ENCODE measurements at regions of chr3 and their contacts with region 1.

Region 1: DNA sequence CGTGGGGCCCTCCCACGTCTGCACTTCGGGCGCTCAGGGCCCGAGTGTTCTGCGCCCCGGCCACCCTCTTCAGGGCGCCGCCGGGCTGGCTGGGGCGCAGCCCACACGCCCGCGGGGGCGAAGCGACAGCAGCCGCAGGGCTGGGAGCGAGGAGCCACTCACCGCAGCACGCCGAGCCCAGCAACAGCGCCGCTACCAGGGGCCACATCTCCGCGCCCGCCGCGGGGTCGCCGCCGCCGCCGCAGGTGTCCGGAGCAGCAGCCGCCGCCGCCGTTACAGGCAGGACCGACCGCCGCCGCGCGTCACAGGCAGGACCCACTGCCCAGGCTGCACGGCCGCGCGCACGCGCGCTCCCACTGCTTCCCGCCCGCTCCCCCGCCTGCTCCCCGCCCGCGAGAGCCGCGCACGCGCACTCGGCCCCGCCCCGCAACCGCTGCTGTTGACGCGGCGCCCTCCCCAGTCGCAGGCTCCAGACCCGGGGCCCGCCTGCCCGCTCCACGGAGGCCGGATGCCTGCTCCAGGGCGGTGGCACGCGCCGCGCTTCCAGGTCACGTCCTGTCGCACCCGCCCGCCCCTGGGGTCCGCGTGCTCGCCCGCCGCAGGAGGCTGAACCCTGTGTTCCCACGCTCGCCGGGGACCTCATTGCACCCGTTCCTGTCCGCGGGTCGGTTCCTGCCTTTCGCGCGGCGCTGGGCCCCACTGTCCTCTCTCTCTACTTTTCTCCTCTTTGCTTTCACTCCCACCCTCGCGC is at the start of gene CD47:
- DNase-seq: peak; percentile 96 to 98 (median 98)
- H3K4me3 ChIP-seq: peak within 1 kb of the TSS; percentile 71 to 82
- H3K4me3 Mint-ChIP-seq: peak within 1 kb of the TSS; percentile 94 to 100 (median 98)
- H3K27ac ChIP-seq: peak within 1 kb of the TSS; percentile 96
- H3K27ac Mint-ChIP-seq: peak within 1 kb of the TSS; percentile 98 to 100 (median 99)
- H3K4me1 ChIP-seq: peaks cover 52% of the 10 kb centered on the region
- H3K4me1 Mint-ChIP-seq: peaks cover 33 to 51% (median 38%) of the 10 kb centered on the region in 4 donors
- H3K27me3 ChIP-seq: no peaks in the 10 kb centered on the region
- H3K27me3 Mint-ChIP-seq: peaks cover 0 to 1% of the 10 kb centered on the region in 2 donors
- total RNA-seq, gene CD47: 224 to 226 TPM

Region 2: DNA sequence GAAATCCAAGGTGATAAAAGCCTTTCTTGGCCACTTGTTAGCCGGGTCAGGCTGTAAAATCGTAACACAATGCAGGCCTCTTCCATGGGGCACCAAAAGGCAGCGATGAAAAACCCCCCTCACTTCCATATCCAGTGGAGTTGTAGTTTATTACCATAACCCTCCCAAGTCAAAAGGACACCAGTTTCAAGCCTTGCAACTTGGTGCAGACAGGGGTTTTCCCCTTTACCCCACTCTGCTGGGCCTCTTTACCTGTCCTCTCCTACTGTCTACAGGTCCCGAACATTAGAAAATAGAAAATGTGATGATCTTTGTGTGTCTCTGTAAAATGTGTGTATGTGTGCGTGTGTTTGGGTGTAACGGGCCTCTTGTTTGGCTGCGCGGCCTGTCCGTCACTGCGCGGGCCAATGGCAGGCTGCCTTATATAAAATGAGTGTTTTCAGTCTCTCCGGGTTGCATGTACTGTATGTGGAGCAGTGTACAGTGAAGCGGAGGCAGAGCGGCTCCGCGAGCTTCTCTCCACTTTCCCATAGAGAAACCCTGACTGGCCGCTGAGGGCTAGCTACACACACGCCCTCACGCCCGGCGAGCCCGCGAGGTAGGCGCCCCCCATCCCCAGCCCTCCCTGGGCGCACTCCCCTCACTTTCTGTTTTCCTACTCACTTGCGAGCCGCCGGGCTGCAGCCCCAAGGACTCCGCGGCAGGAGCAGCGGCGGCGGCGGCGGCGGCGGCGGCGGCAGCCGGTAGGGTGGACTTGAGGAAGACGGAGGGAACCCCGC is 568.2 kb before region 1 on chr3 and contains the start of gene BBX:
- CTCF ChIA-PET with region 1: no interaction called
- POLR2A ChIA-PET with region 1: interaction called, 4 read pairs
- intact Hi-C with region 1: loop called (anchors 10 kb)
- DNase-seq: peak; percentile 92 to 98 (median 96)
- H3K4me3 ChIP-seq: peak within 1 kb of the TSS; percentile 70 to 88
- H3K4me3 Mint-ChIP-seq: peak within 1 kb of the TSS; percentile 97 to 99 (median 98)
- H3K27ac ChIP-seq: peak within 1 kb of the TSS; percentile 87
- H3K27ac Mint-ChIP-seq: peak within 1 kb of the TSS; percentile 88 to 98 (median 97)
- H3K4me1 ChIP-seq: peaks cover 29% of the 10 kb centered on the region
- H3K4me1 Mint-ChIP-seq: peaks cover 21 to 29% (median 25%) of the 10 kb centered on the region in 4 donors
- H3K27me3 ChIP-seq: no peaks in the 10 kb centered on the region
- H3K27me3 Mint-ChIP-seq: no peaks in the 10 kb centered on the region
- total RNA-seq, gene BBX: 93.9 to 99.1 TPM

Region 3: GRCh38 chr3:108073764-108074431 is 17.0 kb before region 1 on chr3:
- CTCF ChIA-PET with region 1: interaction called, 7 read pairs
- POLR2A ChIA-PET with region 1: interaction called, 20 read pairs
- intact Hi-C with region 1: no loop called
- DNase-seq: no peak
- H3K4me3 ChIP-seq: no peak overlapping the region
- H3K4me3 Mint-ChIP-seq: peak overlapping the region in 5 of 8 donors; percentile 19 to 60 (median 29)
- H3K27ac ChIP-seq: no peak overlapping the region
- H3K27ac Mint-ChIP-seq: peak overlapping the region; percentile 28 to 83 (median 67)
- H3K4me1 ChIP-seq: peaks cover 91% of the 10 kb centered on the region
- H3K4me1 Mint-ChIP-seq: peaks cover 64 to 93% (median 69%) of the 10 kb centered on the region in 4 donors
- H3K27me3 ChIP-seq: no peaks in the 10 kb centered on the region
- H3K27me3 Mint-ChIP-seq: no peaks in the 10 kb centered on the region

Region 4: DNA sequence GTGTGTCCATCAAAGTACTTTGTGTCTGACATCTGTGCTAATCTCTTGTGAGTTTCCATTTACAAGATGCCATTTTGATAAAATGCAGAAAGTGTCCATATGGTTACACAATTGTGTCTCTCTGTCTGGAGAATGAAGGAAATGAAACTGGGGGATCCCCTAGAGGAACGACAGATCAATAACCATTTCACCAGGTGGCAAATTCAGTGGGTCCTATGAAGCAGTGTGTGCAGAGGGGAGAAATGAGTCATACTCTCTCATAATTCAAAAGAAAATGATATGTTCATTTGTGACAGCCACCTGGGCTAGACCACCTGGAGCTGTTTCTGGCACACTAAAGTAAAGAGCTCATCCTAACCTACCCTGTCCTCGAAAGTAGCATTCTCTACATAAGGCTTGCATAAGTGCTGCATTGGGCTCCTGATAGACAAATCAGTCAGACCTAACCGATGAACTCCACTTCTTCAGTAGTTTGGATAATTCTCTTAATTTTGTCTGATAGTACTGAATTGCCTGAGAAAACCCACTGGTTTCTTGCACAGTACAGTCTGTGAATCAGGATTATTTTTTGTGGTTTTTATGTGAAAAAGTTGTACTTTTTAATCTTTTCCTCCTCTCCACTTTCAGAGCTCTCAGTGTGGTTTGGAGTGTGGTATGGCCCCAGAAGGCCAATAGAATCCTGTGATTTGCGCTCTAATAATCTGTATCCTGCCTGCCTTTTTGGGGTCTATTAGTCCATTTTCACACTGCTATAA is 10.2 kb after region 1 on chr3:
- CTCF ChIA-PET with region 1: interaction called, 11 read pairs
- POLR2A ChIA-PET with region 1: interaction called, 50 read pairs
- intact Hi-C with region 1: loop called (anchors 1 kb)
- DNase-seq: peak in 2 of 5 donors; percentile 28 to 74
- H3K4me3 ChIP-seq: no peak overlapping the region
- H3K4me3 Mint-ChIP-seq: peak overlapping the region in 5 of 8 donors; percentile 1 to 59 (median 42)
- H3K27ac ChIP-seq: no peak overlapping the region
- H3K27ac Mint-ChIP-seq: peak overlapping the region; percentile 55 to 87 (median 81)
- H3K4me1 ChIP-seq: peaks cover 29% of the 10 kb centered on the region
- H3K4me1 Mint-ChIP-seq: peaks cover 29 to 38% (median 35%) of the 10 kb centered on the region in 4 donors
- H3K27me3 ChIP-seq: no peaks in the 10 kb centered on the region
- H3K27me3 Mint-ChIP-seq: no peaks in the 10 kb centered on the region

Region 5: DNA sequence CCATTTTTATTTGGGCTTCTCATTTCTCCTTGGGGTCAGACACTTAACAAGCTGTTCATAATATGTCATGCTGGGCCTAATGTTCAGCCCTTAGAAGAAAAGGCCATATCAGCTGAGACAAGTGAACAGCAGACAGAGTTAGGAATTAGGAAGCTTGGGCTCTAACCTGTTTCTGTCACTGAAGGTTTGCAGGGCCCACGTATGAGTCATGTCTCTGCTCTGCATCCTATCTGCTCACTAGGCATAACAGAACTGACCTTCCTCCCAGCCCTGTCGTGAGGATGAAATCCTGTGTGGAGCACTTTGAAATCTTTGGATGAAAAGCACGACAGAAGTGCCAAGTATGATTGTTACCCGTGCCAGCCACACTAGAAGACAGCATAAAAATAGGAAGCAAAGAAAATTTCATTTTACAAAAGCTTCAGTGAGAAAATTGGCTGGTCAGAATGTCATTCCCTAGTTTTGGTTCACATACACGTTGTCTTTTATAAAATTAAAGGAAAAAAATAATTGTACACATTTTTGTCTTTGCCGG is 26.4 kb after region 1 on chr3:
- CTCF ChIA-PET with region 1: interaction called, 8 read pairs
- POLR2A ChIA-PET with region 1: interaction called, 531 read pairs
- intact Hi-C with region 1: no loop called
- DNase-seq: no peak
- H3K4me3 ChIP-seq: no peak overlapping the region
- H3K4me3 Mint-ChIP-seq: no peak overlapping the region
- H3K27ac ChIP-seq: no peak overlapping the region
- H3K27ac Mint-ChIP-seq: peak overlapping the region in 1 of 7 donors; percentile 22
- H3K4me1 ChIP-seq: peaks cover 13% of the 10 kb centered on the region
- H3K4me1 Mint-ChIP-seq: peaks cover 7 to 38% (median 29%) of the 10 kb centered on the region in 4 donors
- H3K27me3 ChIP-seq: no peaks in the 10 kb centered on the region
- H3K27me3 Mint-ChIP-seq: no peaks in the 10 kb centered on the region

Region 6: DNA sequence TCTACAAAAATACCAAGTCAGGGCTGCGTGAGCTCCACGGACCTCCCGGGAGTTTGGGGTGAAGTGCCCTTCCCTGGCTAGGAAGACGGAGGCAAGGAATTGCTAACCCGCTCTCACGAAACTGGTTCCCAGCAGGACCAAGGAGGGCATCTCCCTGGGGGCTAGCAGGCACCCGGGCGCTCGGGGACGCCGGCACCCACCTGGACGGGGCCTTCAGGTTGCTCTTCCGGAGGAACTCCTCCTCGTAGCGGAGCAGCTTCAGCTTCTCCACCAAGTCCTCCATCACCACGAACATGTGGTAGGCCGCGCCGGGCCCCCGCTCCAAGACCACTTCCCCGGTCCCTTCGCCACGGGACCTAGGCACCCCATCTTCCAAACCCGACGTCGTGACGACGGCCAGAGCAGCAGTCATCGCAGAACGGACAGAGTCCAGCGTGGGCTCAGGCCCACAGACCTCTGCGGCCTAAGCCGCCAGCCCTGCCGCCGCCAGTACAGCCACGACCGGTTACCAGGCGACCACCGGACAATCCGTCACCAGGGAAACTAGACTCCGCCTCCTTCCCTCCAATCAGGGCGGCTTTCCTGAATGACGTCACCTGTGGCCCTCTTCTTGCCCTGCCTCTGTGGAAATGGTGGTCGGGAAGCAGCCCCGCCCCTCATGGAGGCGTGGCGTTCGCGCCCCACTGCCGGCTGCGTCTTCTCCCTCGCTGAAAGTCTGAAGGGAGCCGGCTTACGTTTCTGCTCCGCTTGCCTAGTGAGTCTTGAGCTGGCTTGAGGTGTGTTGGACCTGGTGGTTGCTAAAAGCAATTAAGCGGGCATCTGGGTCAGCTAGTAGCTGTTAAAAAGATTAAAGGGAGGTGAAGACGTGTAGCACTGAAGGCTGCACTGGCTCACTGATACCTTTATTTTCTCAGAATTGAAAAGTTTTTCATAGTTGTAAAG is 131.3 kb after region 1 on chr3 and contains the start of gene IFT57:
- CTCF ChIA-PET with region 1: interaction called, 7 read pairs
- POLR2A ChIA-PET with region 1: interaction called, 112 read pairs
- intact Hi-C with region 1: loop called (anchors 1 kb)
- DNase-seq: peak; percentile 96 to 97 (median 97)
- H3K4me3 ChIP-seq: peak within 1 kb of the TSS; percentile 66 to 91
- H3K4me3 Mint-ChIP-seq: peak within 1 kb of the TSS; percentile 95 to 99 (median 98)
- H3K27ac ChIP-seq: peak within 1 kb of the TSS; percentile 95
- H3K27ac Mint-ChIP-seq: peak within 1 kb of the TSS; percentile 100
- H3K4me1 ChIP-seq: peaks cover 49% of the 10 kb centered on the region
- H3K4me1 Mint-ChIP-seq: peaks cover 37 to 57% (median 47%) of the 10 kb centered on the region in 4 donors
- H3K27me3 ChIP-seq: no peaks in the 10 kb centered on the region
- H3K27me3 Mint-ChIP-seq: peaks cover 0 to 1% of the 10 kb centered on the region in 2 donors
- total RNA-seq, gene IFT57: 24.1 to 26.1 TPM

Region 7: GRCh38 chr3:108448593-108448992 is 357.7 kb after region 1 on chr3:
- CTCF ChIA-PET with region 1: no interaction called
- POLR2A ChIA-PET with region 1: no interaction called
- intact Hi-C with region 1: no loop called
- DNase-seq: no peak
- H3K4me3 ChIP-seq: no peak overlapping the region
- H3K4me3 Mint-ChIP-seq: no peak overlapping the region
- H3K27ac ChIP-seq: no peak overlapping the region
- H3K27ac Mint-ChIP-seq: no peak overlapping the region
- H3K4me1 ChIP-seq: no peaks in the 10 kb centered on the region
- H3K4me1 Mint-ChIP-seq: no peaks in the 10 kb centered on the region
- H3K27me3 ChIP-seq: no peaks in the 10 kb centered on the region
- H3K27me3 Mint-ChIP-seq: peaks cover 0 to 3% of the 10 kb centered on the region in 2 donors